Left ventricle myocardium superior (tissue), 1 donor: ENCODE measurements at regions of chr15 and their contacts with region 1.

Region 1: GRCh38 chr15:31326156-31326732 is 391 bp upstream of the KLF13 start:
- DNase-seq: peak; percentile 100
- ATAC-seq: peak; percentile 85

Region 2: DNA sequence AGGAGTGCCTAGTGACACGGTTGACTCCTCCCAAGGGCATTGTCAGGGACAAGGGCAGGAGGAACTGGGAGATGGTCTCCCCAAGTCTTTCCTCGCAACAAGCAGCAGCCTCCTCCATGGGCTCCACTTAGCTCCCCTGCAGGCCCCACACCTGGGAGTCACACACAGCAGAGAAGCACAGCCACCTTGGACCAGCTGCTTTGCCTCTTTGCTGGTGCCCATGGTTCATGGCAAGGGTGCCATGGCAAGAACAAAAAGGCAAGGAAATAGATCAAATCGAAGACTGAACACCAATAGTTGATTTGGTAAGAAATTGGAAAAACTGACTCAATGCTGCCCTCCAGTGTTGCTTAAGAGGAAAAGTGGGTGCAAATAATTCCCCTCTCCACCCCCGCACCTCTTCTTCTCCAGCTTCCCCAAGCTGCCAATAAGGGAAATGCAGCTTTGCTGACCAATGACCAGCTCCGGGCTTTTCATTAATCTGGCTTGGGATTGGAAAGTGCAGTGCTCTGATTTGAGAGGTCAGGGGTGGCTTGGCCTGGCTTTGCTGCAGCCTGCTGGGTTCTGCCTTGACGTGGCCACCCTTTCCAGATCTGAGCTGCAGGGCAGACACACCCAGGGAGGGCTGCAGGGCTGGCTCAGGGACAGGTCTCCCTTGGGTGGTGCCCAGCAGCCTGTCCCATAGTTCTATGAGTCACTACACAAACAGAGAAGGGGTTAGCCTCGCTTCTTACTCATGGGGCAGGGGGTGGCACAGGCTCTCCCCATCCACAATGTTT is 162.4 kb after region 1 on chr15:
- intact Hi-C with region 1: loop called (anchors 10 kb)
- DNase-seq: peak; percentile 60
- ATAC-seq: peak; percentile 82